ENCODE measurements at regions of chr18 and their contacts with region 1.

Region 1: GRCh38 chr18:10320791-10321190 is 133.6 kb upstream of the APCDD1 start:
- DNase-seq: peak; percentile 45
- H3K4me3 ChIP-seq: no peak overlapping the region
- H3K27ac ChIP-seq: no peak overlapping the region
- H3K4me1 ChIP-seq: peaks cover 6% of the 10 kb centered on the region
- H3K27me3 ChIP-seq: no peaks in the 10 kb centered on the region
- CTCF ChIP-seq: no peak

Region 2: GRCh38 chr18:9971313-9971920 is 349.4 kb before region 1 on chr18:
- CTCF ChIA-PET with region 1: no interaction called
- dilution Hi-C with region 1: no loop called
- in situ Hi-C with region 1: no loop called
- intact Hi-C with region 1: loop called (anchors 10 kb)
- DNase-seq: peak; percentile 63
- H3K4me3 ChIP-seq: no peak overlapping the region
- H3K27ac ChIP-seq: no peak overlapping the region
- H3K4me1 ChIP-seq: no peaks in the 10 kb centered on the region
- H3K27me3 ChIP-seq: no peaks in the 10 kb centered on the region
- CTCF ChIP-seq: peak; percentile 59 to 70

Region 3: GRCh38 chr18:10242936-10243680 is 77.7 kb before region 1 on chr18:
- CTCF ChIA-PET with region 1: no interaction called
- dilution Hi-C with region 1: loop called (anchors 5 kb)
- in situ Hi-C with region 1: no loop called
- intact Hi-C with region 1: no loop called
- DNase-seq: no peak
- H3K4me3 ChIP-seq: no peak overlapping the region
- H3K27ac ChIP-seq: no peak overlapping the region
- H3K4me1 ChIP-seq: no peaks in the 10 kb centered on the region
- H3K27me3 ChIP-seq: no peaks in the 10 kb centered on the region
- CTCF ChIP-seq: no peak

Region 4: DNA sequence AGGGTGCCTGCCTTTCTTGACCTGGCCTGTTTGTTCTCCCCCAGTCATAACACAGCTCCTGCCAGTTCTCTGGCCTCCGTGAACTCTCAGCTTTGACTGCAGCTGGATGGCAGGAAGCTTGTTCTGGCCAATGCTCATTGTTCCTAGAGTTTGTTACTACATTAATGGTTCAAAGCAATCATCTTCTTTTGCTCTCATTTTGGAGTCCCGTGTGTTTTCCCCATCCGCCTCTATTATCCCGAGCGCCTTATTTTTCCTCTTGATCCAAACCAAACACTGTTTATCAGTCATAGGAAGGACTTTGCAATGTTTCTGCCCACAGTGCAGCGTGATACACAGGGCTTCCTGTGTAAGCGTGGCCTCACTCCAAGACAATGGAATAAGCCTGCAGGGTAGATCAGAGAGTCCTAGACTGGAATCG is 50.6 kb before region 1 on chr18:
- CTCF ChIA-PET with region 1: no interaction called
- dilution Hi-C with region 1: no loop called
- in situ Hi-C with region 1: no loop called
- intact Hi-C with region 1: no loop called
- DNase-seq: no peak
- H3K4me3 ChIP-seq: no peak overlapping the region
- H3K27ac ChIP-seq: no peak overlapping the region
- H3K4me1 ChIP-seq: no peaks in the 10 kb centered on the region
- H3K27me3 ChIP-seq: no peaks in the 10 kb centered on the region
- CTCF ChIP-seq: no peak

Region 5: DNA sequence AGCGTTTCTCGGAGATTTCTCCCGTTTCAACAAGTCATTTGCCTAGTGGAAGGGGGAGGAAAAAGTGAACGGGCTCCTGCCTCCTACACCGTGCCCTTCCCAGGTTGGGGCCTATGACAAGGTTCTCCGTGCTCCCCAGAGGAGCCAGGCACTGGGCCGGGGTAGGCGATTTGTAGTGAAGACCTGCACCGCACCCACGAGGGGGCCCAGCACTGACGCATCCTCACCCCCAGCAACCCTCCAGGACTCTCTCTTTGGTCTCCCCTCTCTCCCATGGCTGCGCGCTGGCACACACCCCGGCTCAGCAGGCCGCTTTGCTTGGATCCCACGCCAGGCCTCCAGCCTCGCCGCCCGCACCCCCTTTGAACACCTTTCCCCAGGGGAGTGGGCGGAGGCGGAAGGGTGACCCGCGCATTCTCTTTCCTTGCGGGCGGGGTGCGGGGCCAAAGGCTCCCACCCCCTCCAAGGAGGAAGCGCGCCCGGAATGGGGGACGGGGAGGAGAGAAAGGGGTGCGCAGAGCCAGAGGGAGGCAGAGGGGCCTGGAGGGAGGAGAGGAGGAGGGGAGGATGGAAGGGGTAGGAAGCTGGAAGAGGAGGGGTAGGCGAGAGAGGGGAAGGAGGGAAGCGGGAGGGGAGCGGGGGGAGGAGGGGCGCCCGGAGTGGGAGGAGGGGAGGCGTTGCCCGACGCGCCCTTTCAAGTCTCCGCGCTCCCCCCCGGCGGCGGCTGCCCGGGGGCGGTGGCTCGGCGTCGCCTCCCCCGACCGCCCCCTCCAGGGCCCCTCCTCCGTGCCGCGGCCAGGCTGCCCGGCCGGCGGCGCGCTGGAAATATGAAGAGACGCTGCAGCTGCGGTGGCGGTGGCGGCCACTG is 133.2 kb after region 1 on chr18 and contains the start of gene APCDD1:
- CTCF ChIA-PET with region 1: no interaction called
- dilution Hi-C with region 1: no loop called
- in situ Hi-C with region 1: no loop called
- intact Hi-C with region 1: loop called (anchors 10 kb)
- DNase-seq: peak; percentile 11
- H3K4me3 ChIP-seq: peak within 1 kb of the TSS; percentile 36 to 52 (median 48)
- H3K27ac ChIP-seq: no peak within 1 kb of the TSS
- H3K4me1 ChIP-seq: peaks cover 7% of the 10 kb centered on the region
- H3K27me3 ChIP-seq: peaks cover 23% of the 10 kb centered on the region
- CTCF ChIP-seq: no peak
- total RNA-seq, gene APCDD1: 9.7 to 24.8 TPM

Region 6: DNA sequence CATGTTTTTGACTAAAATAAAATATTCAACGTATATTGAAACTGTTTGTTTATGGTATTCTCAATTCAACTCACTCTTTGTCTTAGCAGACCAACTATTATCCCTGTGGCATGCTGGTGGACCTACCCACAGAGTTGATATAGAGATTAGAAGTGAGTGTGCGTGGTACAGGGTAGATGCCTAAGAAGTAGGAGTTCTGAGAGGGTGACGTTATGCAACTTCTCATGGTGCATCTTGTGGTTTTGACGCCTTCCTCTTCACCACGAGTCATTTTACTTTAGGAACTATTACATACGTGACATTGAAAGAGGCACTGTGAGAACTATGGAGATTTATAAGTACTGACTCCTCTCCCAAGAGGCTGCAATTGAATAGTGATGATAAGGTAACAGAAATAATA is 178.4 kb after region 1 on chr18:
- CTCF ChIA-PET with region 1: no interaction called
- dilution Hi-C with region 1: no loop called
- in situ Hi-C with region 1: no loop called
- intact Hi-C with region 1: no loop called
- DNase-seq: no peak
- H3K4me3 ChIP-seq: no peak overlapping the region
- H3K27ac ChIP-seq: no peak overlapping the region
- H3K4me1 ChIP-seq: no peaks in the 10 kb centered on the region
- H3K27me3 ChIP-seq: no peaks in the 10 kb centered on the region
- CTCF ChIP-seq: no peak

Region 7: GRCh38 chr18:10525371-10526210 is 204.8 kb after region 1 on chr18 and contains the start of gene NAPG:
- CTCF ChIA-PET with region 1: no interaction called
- dilution Hi-C with region 1: no loop called
- in situ Hi-C with region 1: no loop called
- intact Hi-C with region 1: loop called (anchors 10 kb)
- DNase-seq: peak; percentile 91
- H3K4me3 ChIP-seq: peak within 1 kb of the TSS; percentile 67 to 86 (median 78)
- H3K27ac ChIP-seq: peak within 1 kb of the TSS; percentile 74
- H3K4me1 ChIP-seq: peaks cover 23% of the 10 kb centered on the region
- H3K27me3 ChIP-seq: no peaks in the 10 kb centered on the region
- CTCF ChIP-seq: no peak
- total RNA-seq, gene NAPG: 31.0 to 51.3 TPM

Measured in mammary epithelial cell (primary cell).